H1 (cell line): ENCODE measurements at regions of chr7 and their contacts with region 1.

Region 1: GRCh38 chr7:142478479-142479072 is 220.7 kb upstream of the PRSS58 start:
- DNase-seq: no peak
- H3K4me3 ChIP-seq: no peak overlapping the region
- H3K27ac ChIP-seq: no peak overlapping the region
- H3K4me1 ChIP-seq: peaks cover 0 to 2% (median 0%) of the 10 kb centered on the region in 4 experiments; a peak in 1 of 7 replicates
- H3K27me3 ChIP-seq: no peaks in the 10 kb centered on the region
- CTCF ChIP-seq: peak; percentile 48 to 76 (median 69)
- EP300 ChIP-seq: no peak
- POLR2A ChIP-seq: no peak
- RAD21 ChIP-seq: peak; percentile 41 to 54

Region 2: GRCh38 chr7:142338633-142339501 is 139.7 kb before region 1 on chr7:
- CTCF ChIA-PET with region 1: interaction called, 20 read pairs
- POLR2A ChIA-PET with region 1: no interaction called
- DNase-seq: peak; percentile 34 to 87
- H3K4me3 ChIP-seq: no peak overlapping the region
- H3K27ac ChIP-seq: no peak overlapping the region
- H3K4me1 ChIP-seq: peaks cover 0 to 5% (median 4%) of the 10 kb centered on the region in 4 experiments; a peak in 5 of 7 replicates
- H3K27me3 ChIP-seq: no peaks in the 10 kb centered on the region
- CTCF ChIP-seq: peak; percentile 89 to 92 (median 92)
- EP300 ChIP-seq: no peak
- POLR2A ChIP-seq: no peak
- RAD21 ChIP-seq: peak; percentile 92 to 94

Region 3: GRCh38 chr7:142385491-142386340 is 92.9 kb before region 1 on chr7:
- CTCF ChIA-PET with region 1: interaction called, 43 read pairs
- POLR2A ChIA-PET with region 1: no interaction called
- DNase-seq: peak in 1 of 2 experiments; percentile 68
- H3K4me3 ChIP-seq: no peak overlapping the region
- H3K27ac ChIP-seq: no peak overlapping the region
- H3K4me1 ChIP-seq: no peaks in the 10 kb centered on the region; a peak in 1 of 7 replicates
- H3K27me3 ChIP-seq: no peaks in the 10 kb centered on the region
- CTCF ChIP-seq: peak; percentile 74 to 88 (median 88)
- EP300 ChIP-seq: peak in 1 of 2 experiments; percentile 20; a peak in 1 of 3 replicates
- POLR2A ChIP-seq: no peak
- RAD21 ChIP-seq: peak; percentile 52 to 65; a peak in 3 of 4 replicates

Region 4: DNA sequence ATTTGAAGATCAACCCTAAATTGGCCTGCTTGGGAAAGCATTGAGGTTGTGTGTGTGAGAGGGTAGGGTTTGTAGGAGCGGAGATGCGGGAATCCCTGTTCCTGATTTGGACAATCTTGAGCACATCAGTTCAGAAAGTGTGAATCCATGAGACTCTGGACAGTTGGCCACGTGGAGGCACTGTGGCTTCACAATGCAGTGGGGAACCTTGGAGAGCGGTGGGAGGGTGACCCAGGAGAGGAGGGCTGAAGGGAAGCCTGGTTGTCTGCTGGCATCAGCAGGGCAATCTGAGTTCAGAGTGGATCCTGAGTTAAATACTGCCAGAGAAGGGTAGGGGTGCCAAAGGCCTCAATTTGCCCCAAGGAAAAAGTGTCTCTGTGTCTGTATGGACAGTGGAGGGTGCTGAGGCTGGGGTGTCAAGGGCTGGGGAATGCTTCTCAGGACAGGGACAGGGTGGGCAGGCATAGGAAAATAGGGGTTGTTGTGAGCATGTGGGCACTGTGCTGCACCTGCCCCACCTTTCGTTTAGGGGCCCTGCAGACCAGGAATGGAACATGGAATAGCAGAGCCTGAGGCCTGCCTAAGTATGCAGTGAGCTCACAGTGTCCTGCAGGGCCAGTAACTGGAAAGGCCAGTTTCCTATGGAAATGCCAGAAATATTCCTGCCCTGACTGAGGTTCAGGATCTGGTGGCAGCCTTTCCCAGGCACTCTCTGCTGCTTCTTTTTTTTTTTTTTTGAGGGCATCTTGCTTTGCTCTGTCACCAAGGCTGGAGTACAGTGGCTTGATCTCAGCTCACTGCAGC is 57.8 kb before region 1 on chr7:
- CTCF ChIA-PET with region 1: interaction called, 78 read pairs
- POLR2A ChIA-PET with region 1: no interaction called
- DNase-seq: no peak
- H3K4me3 ChIP-seq: no peak overlapping the region
- H3K27ac ChIP-seq: no peak overlapping the region
- H3K4me1 ChIP-seq: peaks cover 0 to 5% (median 1%) of the 10 kb centered on the region in 4 experiments; a peak in 2 of 7 replicates
- H3K27me3 ChIP-seq: no peaks in the 10 kb centered on the region
- CTCF ChIP-seq: peak; percentile 28 to 52 (median 35)
- EP300 ChIP-seq: no peak
- POLR2A ChIP-seq: no peak
- RAD21 ChIP-seq: peak; percentile 56 to 62

Region 5: GRCh38 chr7:142459551-142459963 is 19.0 kb before region 1 on chr7:
- CTCF ChIA-PET with region 1: interaction called, 682 read pairs
- POLR2A ChIA-PET with region 1: no interaction called
- DNase-seq: peak in 1 of 2 experiments; percentile 53
- H3K4me3 ChIP-seq: no peak overlapping the region
- H3K27ac ChIP-seq: no peak overlapping the region
- H3K4me1 ChIP-seq: no peaks in the 10 kb centered on the region
- H3K27me3 ChIP-seq: no peaks in the 10 kb centered on the region
- CTCF ChIP-seq: peak; percentile 33 to 82 (median 81)
- EP300 ChIP-seq: no peak
- POLR2A ChIP-seq: no peak
- RAD21 ChIP-seq: peak; percentile 65 to 74